CD8-positive, alpha-beta T cell (primary cell): ENCODE measurements at regions of chr18 and their contacts with region 1.

Region 1: GRCh38 chr18:79679111-79679872 is at the start of gene CTDP1:
- DNase-seq: peak; percentile 96 to 100 (median 99)
- ATAC-seq: peak; percentile 82
- H3K4me3 ChIP-seq: peak within 1 kb of the TSS; percentile 98 to 99
- H3K4me3 Mint-ChIP-seq: peak within 1 kb of the TSS; percentile 97
- H3K27ac ChIP-seq: peak within 1 kb of the TSS; percentile 94 to 100
- H3K27ac Mint-ChIP-seq: peak within 1 kb of the TSS; percentile 99
- H3K4me1 ChIP-seq: peaks cover 54% of the 10 kb centered on the region
- H3K4me1 Mint-ChIP-seq: peaks cover 67% of the 10 kb centered on the region
- H3K27me3 ChIP-seq: no peaks in the 10 kb centered on the region
- H3K27me3 Mint-ChIP-seq: no peaks in the 10 kb centered on the region
- CTCF ChIP-seq: no peak
- total RNA-seq, gene CTDP1: 110 to 121 TPM

Region 2: GRCh38 chr18:79077181-79077580 is 602.1 kb before region 1 on chr18:
- CTCF ChIA-PET with region 1: no interaction called
- POLR2A ChIA-PET with region 1: no interaction called
- intact Hi-C with region 1: no loop called
- DNase-seq: no peak
- ATAC-seq: no peak
- H3K4me3 ChIP-seq: no peak overlapping the region
- H3K4me3 Mint-ChIP-seq: no peak overlapping the region
- H3K27ac ChIP-seq: no peak overlapping the region
- H3K27ac Mint-ChIP-seq: no peak overlapping the region
- H3K4me1 ChIP-seq: peaks cover 21% of the 10 kb centered on the region
- H3K4me1 Mint-ChIP-seq: peaks cover 75% of the 10 kb centered on the region
- H3K27me3 ChIP-seq: no peaks in the 10 kb centered on the region
- H3K27me3 Mint-ChIP-seq: no peaks in the 10 kb centered on the region
- CTCF ChIP-seq: no peak

Region 3: GRCh38 chr18:79334496-79335233 is 344.6 kb before region 1 on chr18:
- CTCF ChIA-PET with region 1: no interaction called
- POLR2A ChIA-PET with region 1: no interaction called
- intact Hi-C with region 1: no loop called
- DNase-seq: no peak
- ATAC-seq: no peak
- H3K4me3 ChIP-seq: no peak overlapping the region
- H3K4me3 Mint-ChIP-seq: no peak overlapping the region
- H3K27ac ChIP-seq: no peak overlapping the region
- H3K27ac Mint-ChIP-seq: no peak overlapping the region
- H3K4me1 ChIP-seq: no peaks in the 10 kb centered on the region
- H3K4me1 Mint-ChIP-seq: no peaks in the 10 kb centered on the region
- H3K27me3 ChIP-seq: no peaks in the 10 kb centered on the region
- H3K27me3 Mint-ChIP-seq: no peaks in the 10 kb centered on the region
- CTCF ChIP-seq: no peak

Region 4: DNA sequence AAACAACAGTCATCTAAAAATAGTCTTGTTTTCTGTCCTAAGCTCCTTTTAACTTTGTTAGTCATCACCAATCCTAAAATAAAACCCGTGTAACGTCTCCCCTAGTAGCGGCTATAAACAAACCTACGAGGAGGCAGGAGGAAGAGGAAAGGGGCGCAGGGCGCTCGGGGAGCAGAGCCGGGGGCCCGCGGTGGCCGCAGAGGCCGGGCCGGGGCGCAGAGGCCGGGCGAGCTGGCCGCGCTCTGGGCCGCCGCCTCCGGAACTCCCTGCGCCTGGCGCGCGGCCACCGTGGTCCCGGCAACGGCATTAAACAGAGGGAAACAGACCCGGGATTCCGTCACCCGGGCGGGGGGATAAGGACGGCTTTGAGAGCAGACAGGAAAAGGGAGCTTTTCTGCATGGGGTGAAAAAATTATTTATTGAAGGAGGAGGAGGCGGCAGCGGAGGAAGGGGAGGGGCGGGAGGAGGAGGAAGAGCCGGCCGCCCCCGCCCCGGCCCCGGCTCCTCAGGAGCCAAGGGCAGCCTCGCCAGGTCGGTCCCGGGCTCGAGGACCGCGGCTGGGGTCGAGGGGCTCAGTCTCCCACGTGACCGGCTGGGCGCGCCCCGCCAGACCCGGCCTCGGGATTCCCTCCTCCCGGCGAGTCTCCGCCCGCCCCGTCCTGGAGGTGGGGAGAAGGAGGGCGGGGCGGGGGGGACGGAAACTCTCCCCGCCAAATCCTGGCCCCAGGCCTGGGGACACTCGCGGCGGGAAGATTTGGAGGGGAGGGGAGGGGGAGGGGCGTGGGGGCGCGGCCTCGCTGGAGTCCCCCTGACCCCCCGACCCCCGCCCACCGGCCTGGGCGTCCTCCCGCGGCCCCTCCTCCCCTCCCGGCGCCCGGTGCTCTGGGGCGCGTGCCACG is 285.4 kb before region 1 on chr18:
- CTCF ChIA-PET with region 1: no interaction called
- POLR2A ChIA-PET with region 1: no interaction called
- intact Hi-C with region 1: loop called in 1 of 2 experiments (anchors 5 kb)
- DNase-seq: peak in 5 of 9 experiments; percentile 40 to 69 (median 59)
- ATAC-seq: peak; percentile 15
- H3K4me3 ChIP-seq: peak overlapping the region; percentile 45 to 59
- H3K4me3 Mint-ChIP-seq: peak overlapping the region; percentile 80
- H3K27ac ChIP-seq: peak overlapping the region in 1 of 2 experiments; percentile 24
- H3K27ac Mint-ChIP-seq: peak overlapping the region; percentile 46
- H3K4me1 ChIP-seq: peaks cover 25% of the 10 kb centered on the region
- H3K4me1 Mint-ChIP-seq: peaks cover 33% of the 10 kb centered on the region
- H3K27me3 ChIP-seq: peaks cover 0 to 14% of the 10 kb centered on the region in 2 experiments
- H3K27me3 Mint-ChIP-seq: peaks cover 4% of the 10 kb centered on the region
- CTCF ChIP-seq: no peak

Region 5: GRCh38 chr18:79523736-79524180 is 155.5 kb before region 1 on chr18:
- CTCF ChIA-PET with region 1: no interaction called
- POLR2A ChIA-PET with region 1: interaction called, 4 read pairs
- intact Hi-C with region 1: loop called in 1 of 2 experiments (anchors 5 kb)
- DNase-seq: peak; percentile 44 to 93 (median 73)
- ATAC-seq: peak; percentile 52
- H3K4me3 ChIP-seq: peak overlapping the region; percentile 44 to 52
- H3K4me3 Mint-ChIP-seq: peak overlapping the region; percentile 86
- H3K27ac ChIP-seq: peak overlapping the region; percentile 81
- H3K27ac Mint-ChIP-seq: peak overlapping the region; percentile 97
- H3K4me1 ChIP-seq: peaks cover 62% of the 10 kb centered on the region
- H3K4me1 Mint-ChIP-seq: peaks cover 58% of the 10 kb centered on the region
- H3K27me3 ChIP-seq: no peaks in the 10 kb centered on the region
- H3K27me3 Mint-ChIP-seq: no peaks in the 10 kb centered on the region
- CTCF ChIP-seq: no peak

Region 6: DNA sequence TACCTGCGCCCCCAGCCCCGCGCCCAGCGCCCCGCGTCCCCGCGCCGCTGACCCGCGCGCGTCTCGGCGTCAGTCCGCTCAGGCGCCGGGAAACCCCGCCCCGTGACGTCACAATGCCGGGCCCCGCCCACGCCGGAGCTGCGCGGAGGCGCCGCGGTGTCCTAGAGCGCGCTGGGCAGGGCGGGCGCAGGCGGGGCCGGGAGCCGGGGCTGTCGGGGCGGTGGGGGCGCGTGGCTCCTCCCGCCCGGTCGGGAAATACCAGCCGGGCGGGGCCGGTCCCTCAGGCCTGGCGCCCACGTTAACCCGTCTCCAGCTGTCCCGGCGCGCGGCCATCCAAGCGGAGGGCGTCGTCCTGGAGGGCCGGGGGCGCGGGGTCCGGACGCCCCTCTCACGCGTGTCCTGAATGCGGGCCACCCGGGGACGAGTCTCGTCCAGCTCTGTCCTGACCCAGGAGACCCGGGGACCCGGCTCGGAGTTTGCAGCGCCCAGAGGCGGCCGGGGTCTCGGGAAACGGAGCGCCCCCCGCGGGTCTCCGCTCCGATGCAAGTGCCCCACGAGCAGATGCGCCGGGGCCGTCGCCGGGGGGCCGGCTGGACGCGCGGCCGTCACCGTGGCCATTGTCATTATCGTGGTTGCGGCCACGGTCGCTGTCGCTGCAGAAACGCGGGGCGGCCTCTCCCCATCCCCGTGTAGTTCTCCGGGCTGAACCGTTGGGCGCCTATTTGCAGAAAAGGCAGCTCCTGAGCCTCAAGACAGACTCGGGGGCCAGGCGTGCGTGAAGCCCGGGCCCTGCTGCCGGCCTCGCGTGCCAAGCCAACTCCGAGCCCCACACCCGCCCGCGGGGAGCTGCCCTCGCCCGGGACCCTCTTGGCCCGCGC is 272.5 kb after region 1 on chr18 and contains the start of gene SLC66A2:
- CTCF ChIA-PET with region 1: no interaction called
- POLR2A ChIA-PET with region 1: interaction called, 3 read pairs
- intact Hi-C with region 1: loop called (anchors 1 to 5 kb)
- DNase-seq: peak; percentile 91 to 99 (median 94)
- ATAC-seq: peak; percentile 93
- H3K4me3 ChIP-seq: peak within 1 kb of the TSS; percentile 60 to 69
- H3K4me3 Mint-ChIP-seq: peak within 1 kb of the TSS; percentile 88
- H3K27ac ChIP-seq: peak within 1 kb of the TSS in 1 of 2 experiments; percentile 58
- H3K27ac Mint-ChIP-seq: peak within 1 kb of the TSS; percentile 83
- H3K4me1 ChIP-seq: peaks cover 26% of the 10 kb centered on the region
- H3K4me1 Mint-ChIP-seq: peaks cover 26% of the 10 kb centered on the region
- H3K27me3 ChIP-seq: no peaks in the 10 kb centered on the region
- H3K27me3 Mint-ChIP-seq: no peaks in the 10 kb centered on the region
- CTCF ChIP-seq: no peak
- total RNA-seq, gene SLC66A2: 50.0 to 53.4 TPM

Region 7: DNA sequence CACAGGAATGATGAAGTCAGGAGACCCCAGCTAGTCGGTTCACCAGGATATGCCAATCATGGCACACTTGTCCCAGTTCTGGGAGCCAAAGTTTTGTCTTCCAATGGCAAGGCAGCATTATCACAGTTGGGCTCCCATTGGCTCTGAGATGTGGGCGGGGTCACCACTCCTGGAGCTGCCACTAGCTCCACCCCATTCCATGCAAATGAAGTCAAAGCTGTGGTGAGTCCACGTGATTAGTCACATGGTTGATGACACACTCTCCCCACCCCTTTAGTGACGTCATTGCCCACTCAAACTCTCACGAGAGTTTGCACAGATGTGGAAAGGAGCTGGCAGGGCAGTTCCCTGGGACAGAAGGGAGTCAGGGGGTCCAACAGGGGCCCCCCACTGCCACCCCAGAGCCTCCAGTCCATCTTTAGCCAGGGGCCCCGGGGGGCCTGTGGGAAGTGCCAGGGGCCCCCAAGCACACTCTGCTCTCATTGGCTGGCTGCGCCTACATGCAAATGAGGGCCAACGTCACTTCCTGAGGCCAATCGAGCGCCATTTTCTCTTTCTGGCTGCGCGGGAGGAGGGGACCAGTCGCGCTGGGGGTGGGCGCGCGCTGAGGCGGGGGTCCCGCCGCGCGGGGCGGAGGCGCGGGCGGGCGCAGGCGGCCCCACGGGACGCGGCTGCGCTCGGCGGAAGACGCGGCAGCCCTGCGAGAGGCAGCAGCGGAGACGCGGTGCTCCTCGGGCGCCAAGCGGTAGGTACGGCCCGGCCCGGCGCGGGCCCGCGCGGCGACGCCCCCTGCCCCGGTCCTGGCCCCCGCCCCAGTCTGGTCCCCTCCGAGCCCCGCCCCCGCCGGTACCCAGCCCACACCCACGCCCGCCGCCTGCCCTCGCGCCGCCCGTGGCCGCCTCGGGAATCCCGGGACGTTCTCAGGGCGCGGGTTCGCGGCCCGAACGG is 429.7 kb after region 1 on chr18 and contains the start of gene ADNP2:
- CTCF ChIA-PET with region 1: no interaction called
- POLR2A ChIA-PET with region 1: no interaction called
- intact Hi-C with region 1: loop called (anchors 2 kb)
- DNase-seq: peak; percentile 41 to 96 (median 80)
- ATAC-seq: peak; percentile 80
- H3K4me3 ChIP-seq: peak within 1 kb of the TSS; percentile 66 to 72
- H3K4me3 Mint-ChIP-seq: peak within 1 kb of the TSS; percentile 84
- H3K27ac ChIP-seq: peak within 1 kb of the TSS; percentile 90 to 94
- H3K27ac Mint-ChIP-seq: peak within 1 kb of the TSS; percentile 95
- H3K4me1 ChIP-seq: peaks cover 16% of the 10 kb centered on the region
- H3K4me1 Mint-ChIP-seq: peaks cover 42% of the 10 kb centered on the region
- H3K27me3 ChIP-seq: no peaks in the 10 kb centered on the region
- H3K27me3 Mint-ChIP-seq: no peaks in the 10 kb centered on the region
- CTCF ChIP-seq: no peak
- total RNA-seq, gene ADNP2: 96.7 to 100 TPM